Endothelial cell of umbilical vein (primary cell): ENCODE measurements at regions of chr15 and their contacts with region 1.

Region 1: DNA sequence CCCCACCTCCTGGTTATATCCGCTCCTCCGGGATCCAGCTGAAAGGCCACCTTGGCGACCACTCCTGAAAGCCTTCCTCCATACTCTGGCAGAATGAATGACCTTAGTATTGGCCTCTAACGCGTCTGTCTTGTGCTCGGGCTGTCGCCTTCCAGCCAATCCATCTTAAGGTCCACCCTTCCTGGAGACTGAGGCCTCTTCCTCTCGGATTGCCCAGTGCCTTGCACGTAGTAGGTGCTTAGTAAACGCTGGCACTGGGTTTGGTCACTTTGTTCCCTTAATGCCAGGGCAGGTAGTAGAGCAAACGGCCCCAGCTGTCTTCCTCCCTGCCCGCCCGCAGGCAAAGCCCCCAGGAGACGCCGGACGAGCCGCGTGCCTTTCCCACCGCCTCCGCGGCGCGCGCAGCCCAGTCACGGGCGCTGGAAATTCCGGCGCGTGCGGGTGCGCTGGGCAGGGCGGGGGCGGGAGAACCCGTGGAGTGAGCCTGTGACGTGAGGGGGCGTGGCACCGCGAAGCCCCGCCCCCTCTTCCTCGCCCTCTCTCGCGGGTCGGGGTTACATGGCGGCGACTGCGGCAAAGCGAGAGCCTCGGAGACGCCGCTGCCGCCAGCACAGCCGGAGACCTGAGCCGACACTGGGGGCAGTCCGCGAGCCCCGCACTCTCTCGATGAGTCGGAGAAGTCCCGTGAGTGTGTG is at the start of gene MAPK6:
- DNase-seq: peak; percentile 93
- H3K4me3 ChIP-seq: peak within 1 kb of the TSS; percentile 73 to 99 (median 90)
- H3K27ac ChIP-seq: peak within 1 kb of the TSS; percentile 96
- H3K4me1 ChIP-seq: peaks cover 25% of the 10 kb centered on the region
- H3K27me3 ChIP-seq: no peaks in the 10 kb centered on the region
- CTCF ChIP-seq: no peak
- POLR2A ChIP-seq: peak; percentile 75
- total RNA-seq, gene MAPK6: 35.7 and 37.4 TPM in 2 replicates

Region 2: GRCh38 chr15:51667478-51667877 is 351.4 kb before region 1 on chr15:
- CTCF ChIA-PET with region 1: no interaction called
- POLR2A ChIA-PET with region 1: no interaction called
- dilution Hi-C with region 1: no loop called
- intact Hi-C with region 1: no loop called
- DNase-seq: no peak
- H3K4me3 ChIP-seq: no peak overlapping the region
- H3K27ac ChIP-seq: no peak overlapping the region
- H3K4me1 ChIP-seq: no peaks in the 10 kb centered on the region
- H3K27me3 ChIP-seq: peaks cover 14 to 33% of the 10 kb centered on the region in 2 experiments
- CTCF ChIP-seq: no peak
- POLR2A ChIP-seq: no peak

Region 3: DNA sequence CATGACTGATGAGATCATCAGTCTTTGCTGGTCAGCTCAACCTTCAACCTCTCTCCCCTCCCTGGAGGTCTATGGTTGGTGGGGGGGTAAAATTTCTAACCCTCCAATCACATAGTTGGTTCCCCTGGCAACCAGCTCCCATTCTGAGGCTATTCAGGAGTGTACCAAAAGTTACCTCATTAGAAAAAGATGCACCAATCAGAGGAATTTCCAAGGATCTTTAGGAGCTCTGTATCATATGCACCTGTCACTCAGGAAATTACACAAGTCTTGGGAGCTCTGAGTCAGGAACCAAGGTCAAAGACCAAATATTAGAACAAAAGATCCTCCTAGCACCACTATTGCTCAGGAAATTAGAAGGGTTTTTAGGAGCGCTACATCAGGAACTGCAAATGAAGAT is 25.9 kb before region 1 on chr15:
- CTCF ChIA-PET with region 1: no interaction called
- POLR2A ChIA-PET with region 1: interaction called, 6 read pairs
- dilution Hi-C with region 1: no loop called
- intact Hi-C with region 1: loop called (anchors 1 kb)
- DNase-seq: peak; percentile 74
- H3K4me3 ChIP-seq: peak overlapping the region in 1 of 3 experiments; percentile 12
- H3K27ac ChIP-seq: peak overlapping the region; percentile 27
- H3K4me1 ChIP-seq: peaks cover 20% of the 10 kb centered on the region
- H3K27me3 ChIP-seq: no peaks in the 10 kb centered on the region
- CTCF ChIP-seq: no peak
- POLR2A ChIP-seq: no peak

Region 4: GRCh38 chr15:52005748-52006701 is 12.8 kb before region 1 on chr15:
- CTCF ChIA-PET with region 1: interaction called, 5 read pairs
- POLR2A ChIA-PET with region 1: interaction called, 3 read pairs
- dilution Hi-C with region 1: no loop called
- intact Hi-C with region 1: loop called (anchors 1 kb)
- DNase-seq: peak; percentile 87
- H3K4me3 ChIP-seq: no peak overlapping the region
- H3K27ac ChIP-seq: peak overlapping the region; percentile 80
- H3K4me1 ChIP-seq: peaks cover 46% of the 10 kb centered on the region
- H3K27me3 ChIP-seq: no peaks in the 10 kb centered on the region
- CTCF ChIP-seq: no peak
- POLR2A ChIP-seq: no peak

Region 5: DNA sequence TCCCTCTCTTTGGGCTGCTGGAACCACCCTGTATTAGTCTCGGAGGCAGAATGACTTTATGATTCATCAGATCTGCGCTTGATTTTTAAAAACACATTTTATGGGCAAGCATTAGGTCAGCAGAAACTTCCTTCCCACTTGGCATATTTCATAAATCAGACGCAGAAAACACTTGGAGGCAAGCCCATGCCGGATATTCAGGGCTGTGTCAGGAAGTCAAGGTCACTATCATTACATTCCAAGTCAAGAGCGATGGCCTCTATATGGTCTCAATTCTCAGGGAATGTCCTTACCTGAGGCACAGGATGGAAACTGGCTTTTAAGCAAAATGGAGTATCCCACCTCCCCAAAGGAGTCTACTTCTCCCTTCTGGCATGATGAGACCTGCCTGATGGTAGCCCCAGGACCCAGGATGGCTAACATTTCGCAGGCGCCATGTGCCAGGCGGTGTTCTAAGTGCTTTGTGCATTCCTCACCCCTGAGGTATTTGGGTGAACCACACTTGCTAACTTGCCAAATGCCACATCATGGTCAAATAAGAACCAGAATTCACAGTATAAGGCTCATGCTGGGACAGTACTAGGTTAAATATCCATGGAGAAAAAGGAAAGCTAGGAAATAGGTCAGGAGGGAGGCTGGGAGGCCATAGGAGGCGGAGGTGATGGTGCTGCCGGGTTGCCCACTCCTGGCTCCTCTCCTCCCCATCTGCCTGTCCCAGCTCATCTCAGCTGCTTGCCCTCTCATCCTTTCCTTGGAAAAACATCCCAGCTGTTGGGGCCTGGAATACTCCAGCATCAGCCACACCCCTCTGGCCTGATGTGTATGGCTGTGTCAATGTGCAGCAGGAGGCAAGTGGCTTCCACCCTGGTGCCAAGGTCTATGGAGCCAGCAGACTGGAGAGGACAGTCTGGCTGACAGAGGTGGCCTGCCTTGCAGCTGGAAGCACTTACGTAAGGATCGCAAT is 75.0 kb after region 1 on chr15:
- CTCF ChIA-PET with region 1: no interaction called
- POLR2A ChIA-PET with region 1: no interaction called
- dilution Hi-C with region 1: no loop called
- intact Hi-C with region 1: loop called (anchors 1 kb)
- DNase-seq: peak; percentile 99
- H3K4me3 ChIP-seq: peak overlapping the region in 1 of 3 experiments; percentile 14
- H3K27ac ChIP-seq: peak overlapping the region; percentile 99
- H3K4me1 ChIP-seq: peaks cover 34% of the 10 kb centered on the region
- H3K27me3 ChIP-seq: no peaks in the 10 kb centered on the region
- CTCF ChIP-seq: no peak
- POLR2A ChIP-seq: peak; percentile 69